MCF 10A (cell line): ENCODE measurements at regions of chr9 and their contacts with region 1.

Region 1: GRCh38 chr9:36317764-36318163 is 59.5 kb upstream of the GNE start:
- DNase-seq: peak; percentile 62
- H3K4me3 Mint-ChIP-seq: no peak overlapping the region
- H3K27ac Mint-ChIP-seq: no peak overlapping the region
- H3K4me1 Mint-ChIP-seq: no peaks in the 10 kb centered on the region
- H3K27me3 Mint-ChIP-seq: no peaks in the 10 kb centered on the region
- CTCF ChIP-seq: no peak

Region 2: DNA sequence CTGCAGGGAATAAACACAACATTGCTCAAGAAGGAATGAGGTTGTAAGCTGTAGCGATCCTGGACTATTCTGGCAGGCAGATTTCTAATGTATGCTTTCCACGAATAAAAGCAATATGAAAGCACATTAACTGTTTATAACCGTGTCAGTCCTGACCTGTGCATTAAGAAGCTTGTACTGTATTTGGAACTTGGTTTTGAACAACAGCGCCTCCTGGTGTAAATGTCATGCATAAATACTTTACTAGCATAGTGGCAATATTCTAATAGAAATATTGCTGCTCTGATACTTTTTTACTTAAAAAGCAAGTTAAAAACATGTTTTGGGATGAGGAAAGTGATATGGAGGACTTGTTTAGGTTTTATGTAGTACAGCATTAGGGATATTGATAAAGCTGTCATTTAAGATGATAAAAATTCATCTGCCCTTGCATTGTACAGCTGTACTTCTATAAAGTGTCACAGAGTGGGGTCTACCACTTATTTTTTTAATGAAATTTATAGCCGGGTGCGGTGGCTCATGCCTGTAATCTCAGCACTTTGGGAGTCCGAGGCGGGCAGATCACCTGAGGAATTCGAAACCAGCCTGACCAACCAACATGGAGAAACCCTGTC is 11.1 kb after region 1 on chr9:
- CTCF ChIA-PET with region 1: interaction called, 45 read pairs
- POLR2A ChIA-PET with region 1: no interaction called
- intact Hi-C with region 1: no loop called
- DNase-seq: peak; percentile 79
- H3K4me3 Mint-ChIP-seq: no peak overlapping the region
- H3K27ac Mint-ChIP-seq: no peak overlapping the region
- H3K4me1 Mint-ChIP-seq: peaks cover 8% of the 10 kb centered on the region
- H3K27me3 Mint-ChIP-seq: no peaks in the 10 kb centered on the region
- CTCF ChIP-seq: peak; percentile 56